ENCODE measurements at regions of chr14 and their contacts with region 1.

Region 1: GRCh38 chr14:22614224-22614799 is 16.2 kb downstream of the ABHD4 start:
- DNase-seq: peak; percentile 91
- H3K4me3 ChIP-seq: no peak overlapping the region
- H3K27ac ChIP-seq: peak overlapping the region; percentile 71
- H3K4me1 ChIP-seq: peaks cover 18% of the 10 kb centered on the region
- H3K27me3 ChIP-seq: no peaks in the 10 kb centered on the region
- CTCF ChIP-seq: no peak

Region 2: GRCh38 chr14:22472935-22473854 is 141.1 kb before region 1 on chr14:
- CTCF ChIA-PET with region 1: no interaction called
- dilution Hi-C with region 1: no loop called
- in situ Hi-C with region 1: no loop called
- intact Hi-C with region 1: no loop called
- DNase-seq: peak; percentile 39
- H3K4me3 ChIP-seq: no peak overlapping the region
- H3K27ac ChIP-seq: no peak overlapping the region
- H3K4me1 ChIP-seq: no peaks in the 10 kb centered on the region
- H3K27me3 ChIP-seq: peaks cover 5% of the 10 kb centered on the region
- CTCF ChIP-seq: peak; percentile 52 to 65

Region 3: DNA sequence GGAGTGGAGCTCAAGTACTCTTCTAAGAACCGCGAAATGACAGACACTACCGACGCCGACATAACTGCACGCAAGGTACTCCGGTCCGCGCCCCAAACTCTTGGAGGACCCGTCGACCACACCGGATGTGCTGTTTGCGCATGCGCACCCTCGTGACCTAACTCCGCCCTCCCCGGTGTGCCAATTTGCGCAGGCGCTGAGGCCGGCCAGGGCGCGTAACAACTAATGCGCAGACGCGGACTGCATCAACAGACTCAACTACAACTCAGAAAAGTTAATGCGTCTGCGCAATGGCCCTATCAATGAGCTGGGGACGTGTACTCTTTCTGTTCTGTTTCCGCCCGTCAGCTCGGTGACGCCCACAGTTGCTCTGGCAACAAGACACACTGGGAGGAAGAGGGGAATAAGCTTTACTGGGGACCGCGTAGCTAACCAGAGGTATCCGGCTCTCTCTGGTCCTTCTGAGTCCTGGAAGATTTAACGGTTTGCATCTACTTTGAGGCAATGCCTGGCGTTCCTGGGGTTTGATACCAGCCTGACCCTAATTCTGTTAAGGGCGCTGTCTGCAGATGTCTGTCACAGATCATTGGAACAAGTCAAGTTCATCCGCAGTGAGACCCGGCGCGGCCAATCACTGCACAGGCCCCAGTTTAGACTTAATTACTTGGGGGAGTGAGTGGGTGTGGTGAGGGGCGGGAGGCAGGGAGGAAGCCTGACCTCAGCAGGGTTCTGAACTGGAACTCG is 25.0 kb before region 1 on chr14 and contains the start of gene DAD1:
- CTCF ChIA-PET with region 1: no interaction called
- dilution Hi-C with region 1: no loop called
- in situ Hi-C with region 1: no loop called
- intact Hi-C with region 1: loop called (anchors 1 kb)
- DNase-seq: peak; percentile 99
- H3K4me3 ChIP-seq: peak within 1 kb of the TSS; percentile 67 to 98 (median 81)
- H3K27ac ChIP-seq: peak within 1 kb of the TSS; percentile 98
- H3K4me1 ChIP-seq: peaks cover 13% of the 10 kb centered on the region
- H3K27me3 ChIP-seq: no peaks in the 10 kb centered on the region
- CTCF ChIP-seq: no peak
- total RNA-seq, gene DAD1: 154 to 169 TPM

Measured in mammary epithelial cell (primary cell).